GM13977 (cell line): ENCODE measurements at regions of chr6 and their contacts with region 1.

Region 1: DNA sequence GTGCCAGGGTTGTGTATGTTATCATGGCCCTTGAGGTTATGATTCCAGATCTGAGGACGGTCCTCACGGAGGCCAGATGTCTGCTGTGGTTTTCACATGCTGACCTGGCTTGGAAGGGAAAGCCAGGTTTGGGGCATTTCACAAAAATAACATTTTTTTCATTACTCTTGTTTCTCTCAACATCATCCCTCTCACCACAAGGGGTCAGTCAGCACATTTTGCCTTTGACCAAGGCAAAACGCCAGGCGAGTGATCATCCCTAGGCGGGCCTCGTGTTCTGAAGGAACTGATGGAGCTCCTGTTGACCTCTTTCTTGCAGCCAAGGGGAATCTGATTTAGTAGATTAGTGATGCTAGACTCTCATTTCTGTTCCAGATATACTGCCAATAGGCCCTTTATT is 133.5 kb downstream of the TBC1D7 start:
- DNase-seq: peak; percentile 77
- CTCF ChIP-seq: peak; percentile 79

Region 2: DNA sequence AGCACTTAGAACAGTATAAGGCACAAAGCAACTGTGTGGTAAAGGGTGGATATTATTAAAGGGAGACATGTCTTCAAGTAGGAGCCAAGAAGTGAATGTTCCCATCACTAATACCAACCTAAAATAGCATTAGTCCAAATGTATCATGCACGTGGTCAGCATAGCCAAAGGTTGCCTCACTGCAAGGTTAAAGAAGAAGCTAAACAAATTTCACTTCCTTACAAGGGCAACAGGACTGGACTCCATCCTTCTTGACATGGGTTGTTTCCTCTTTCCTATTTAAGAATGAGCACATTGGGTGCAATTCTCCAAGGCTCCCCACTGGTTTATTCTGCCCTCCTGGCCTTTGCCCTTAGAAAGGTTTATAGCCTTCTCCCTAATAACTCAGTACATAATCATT is 291.6 kb before region 1 on chr6:
- in situ Hi-C with region 1: no loop called
- DNase-seq: no peak
- CTCF ChIP-seq: no peak

Region 3: DNA sequence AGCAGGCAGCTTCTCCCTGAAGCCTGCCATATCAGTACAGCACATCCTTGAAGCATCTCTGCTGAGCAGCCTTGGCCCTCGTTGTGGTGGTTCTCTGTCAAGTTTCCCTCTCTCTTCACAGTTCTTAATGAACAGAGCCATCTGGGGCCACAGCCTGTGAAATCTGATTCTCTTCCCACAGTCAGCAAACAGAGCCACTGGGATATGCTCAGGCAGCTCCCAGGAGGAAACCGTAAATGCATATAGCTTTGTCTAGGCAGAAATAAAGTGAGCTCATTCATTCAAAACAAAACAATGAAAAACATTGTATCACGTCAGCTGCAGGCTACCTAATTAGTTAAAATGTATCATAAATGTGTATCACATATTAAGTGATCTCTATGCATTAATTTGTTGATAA is 53.2 kb after region 1 on chr6:
- in situ Hi-C with region 1: no loop called
- DNase-seq: no peak
- CTCF ChIP-seq: no peak

Region 4: DNA sequence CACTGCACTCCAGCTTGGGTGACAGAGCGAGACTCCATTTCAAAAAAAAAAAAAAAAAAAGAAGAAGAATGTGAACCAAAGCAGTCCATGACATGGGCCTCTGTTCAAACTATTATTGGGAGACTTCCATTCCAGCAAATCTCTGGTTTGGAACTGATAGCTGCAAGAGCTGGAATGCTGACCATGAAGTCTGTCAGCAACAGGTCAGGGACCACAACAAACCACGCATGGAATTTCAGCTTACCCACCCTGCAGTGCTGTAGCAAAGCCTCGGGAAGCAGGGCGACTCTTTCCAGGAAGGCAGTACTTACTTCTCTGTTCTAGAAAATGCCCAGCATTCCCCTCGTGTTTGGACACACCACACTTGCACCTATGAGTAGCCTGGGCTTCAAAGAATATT is 167.6 kb after region 1 on chr6:
- in situ Hi-C with region 1: no loop called
- DNase-seq: no peak
- CTCF ChIP-seq: no peak

Region 5: DNA sequence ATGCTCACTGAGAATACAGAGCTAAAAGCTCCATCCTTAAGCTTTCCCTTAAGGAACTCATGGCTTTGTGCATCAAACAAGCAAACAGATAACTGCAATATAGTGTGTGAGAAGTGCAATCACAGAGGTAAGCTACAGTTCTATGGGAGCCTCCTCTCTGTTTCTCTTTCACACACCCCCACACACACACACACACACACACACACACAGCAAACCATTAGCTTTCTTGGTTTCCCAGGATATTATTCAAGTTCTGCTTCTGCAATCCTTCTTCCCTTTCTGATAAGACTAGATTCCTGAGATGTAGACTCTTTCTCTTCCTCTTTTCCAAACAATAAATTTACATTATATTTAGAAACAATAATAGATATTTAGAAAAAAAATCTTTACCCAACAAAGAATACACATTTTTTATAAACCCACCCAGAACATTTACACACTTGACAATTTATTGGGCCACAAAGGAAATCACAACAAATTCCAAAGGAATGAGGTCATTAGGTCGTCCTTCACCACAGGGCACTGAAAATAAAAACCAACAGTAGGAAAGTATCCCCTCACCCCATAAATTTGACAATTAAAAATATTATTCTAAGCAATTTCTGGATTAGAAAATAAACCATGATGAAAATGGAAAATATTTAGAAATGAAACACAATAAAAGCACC is 301.8 kb after region 1 on chr6:
- in situ Hi-C with region 1: no loop called
- DNase-seq: no peak
- CTCF ChIP-seq: no peak

Region 6: DNA sequence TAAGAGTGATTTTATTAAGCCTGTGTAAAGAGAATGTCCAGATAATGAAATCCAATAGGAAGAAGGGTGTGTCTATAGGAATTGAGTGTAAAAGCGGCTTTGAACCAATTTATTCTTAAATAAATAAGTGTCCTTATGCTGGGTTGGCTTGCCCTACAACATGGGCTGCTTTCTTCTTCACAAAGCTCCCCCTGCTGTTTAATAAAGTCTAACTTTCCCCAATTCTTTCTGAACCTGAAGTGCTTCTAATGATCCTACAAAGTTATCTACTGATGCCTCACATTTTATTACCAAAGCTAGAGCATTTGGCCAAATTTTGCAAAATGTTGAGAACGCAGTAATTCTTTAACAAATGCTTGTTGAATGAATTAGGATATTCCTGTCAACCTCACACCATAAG is 343.2 kb after region 1 on chr6:
- in situ Hi-C with region 1: loop called (anchors 25 kb)
- DNase-seq: peak; percentile 75
- CTCF ChIP-seq: peak; percentile 33